ENCODE measurements at regions of chr10 and their contacts with region 1.

Region 1: DNA sequence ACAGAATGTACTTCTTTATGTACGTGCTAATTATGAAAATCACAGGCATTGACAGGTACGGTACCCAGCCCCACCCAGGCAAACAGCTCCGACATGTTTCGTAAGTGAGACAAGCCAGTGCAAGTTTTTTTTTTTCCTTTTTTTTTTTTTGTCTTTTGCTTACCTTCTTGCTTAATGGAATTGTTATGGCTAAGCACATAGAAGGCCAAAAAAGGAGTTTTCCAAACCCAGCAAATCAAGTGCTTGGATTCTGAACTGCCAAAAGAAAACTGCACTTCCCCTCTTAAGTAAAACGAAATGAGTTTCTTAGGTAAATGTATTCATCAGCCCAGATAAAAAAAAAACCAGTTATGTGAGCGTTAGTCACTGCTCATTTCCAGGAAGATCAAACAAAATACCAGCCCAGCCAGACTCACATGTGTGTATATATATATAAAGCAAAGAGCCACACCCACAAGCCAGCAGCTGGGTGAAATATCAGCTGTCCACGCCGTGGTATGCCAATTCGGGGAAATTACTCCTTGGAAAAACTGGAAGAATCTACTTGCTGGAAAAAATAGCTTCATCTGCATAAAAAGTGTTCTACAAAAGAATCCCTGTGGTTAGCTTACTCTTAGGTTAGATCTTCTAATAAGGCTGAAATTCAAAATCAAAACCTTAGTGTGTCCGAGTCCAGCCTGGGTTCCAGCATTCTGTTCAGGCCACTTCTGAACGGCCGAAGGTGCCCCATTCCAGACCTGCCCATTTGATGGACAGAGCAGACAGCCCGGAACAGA is 8.0 kb downstream of the KLF6 start:
- DNase-seq: peak; percentile 72
- H3K4me3 ChIP-seq: peak overlapping the region in 1 of 4 donors; percentile 6
- H3K27ac ChIP-seq: peak overlapping the region; percentile 99 to 100 (median 100)
- H3K4me1 ChIP-seq: peaks cover 11 to 74% (median 62%) of the 10 kb centered on the region in 4 donors
- H3K27me3 ChIP-seq: no peaks in the 10 kb centered on the region
- CTCF ChIP-seq: no peak
- EP300 ChIP-seq: peak; percentile 66
- POLR2A ChIP-seq: peak; percentile 50

Region 2: DNA sequence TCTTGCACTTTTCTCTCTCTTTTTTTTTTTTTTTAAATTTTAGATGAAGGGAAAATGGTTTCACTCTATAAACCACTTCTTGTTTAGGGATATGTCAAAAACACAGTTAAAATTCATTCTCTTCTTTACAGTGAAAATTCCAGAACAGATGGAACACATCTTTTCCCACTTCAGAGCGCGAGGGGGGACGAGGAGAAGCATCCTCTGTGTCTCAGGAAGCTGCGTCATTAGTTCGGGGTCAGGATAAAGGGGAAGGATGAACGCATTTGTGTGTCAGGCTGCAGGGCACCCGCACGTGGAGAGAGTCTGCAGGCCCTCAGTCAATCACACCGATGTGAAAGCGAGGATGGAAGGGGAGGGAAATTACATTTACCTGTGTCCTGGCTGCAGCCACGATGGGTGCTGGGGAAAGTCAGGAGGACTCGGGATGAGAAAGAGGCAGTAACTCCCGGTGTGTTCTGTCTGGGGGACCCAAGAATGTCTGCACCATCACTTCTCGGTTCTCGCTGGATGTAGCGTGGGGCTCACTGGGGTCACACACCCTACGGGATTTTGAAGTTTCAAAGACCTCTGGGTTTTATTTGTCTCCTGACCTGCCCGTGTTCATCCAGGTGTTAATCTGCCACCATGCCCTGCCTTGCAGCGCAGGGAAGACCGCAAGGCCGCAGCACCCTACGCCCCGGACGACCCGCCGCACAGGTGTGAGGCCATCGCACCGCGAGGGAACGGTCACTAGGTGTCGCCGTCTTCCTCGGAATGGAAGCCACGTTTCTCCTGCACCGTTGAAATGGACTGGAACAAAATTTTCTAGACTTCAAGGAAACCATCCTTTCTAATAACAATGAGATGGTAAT is 537.7 kb before region 1 on chr10:
- in situ Hi-C with region 1: loop called in 3 of 4 experiments (anchors 5 to 25 kb)
- intact Hi-C with region 1: no loop called
- DNase-seq: peak; percentile 83
- H3K4me3 ChIP-seq: no peak overlapping the region
- H3K27ac ChIP-seq: no peak overlapping the region
- H3K4me1 ChIP-seq: peaks cover 0 to 7% (median 0%) of the 10 kb centered on the region in 4 donors
- H3K27me3 ChIP-seq: no peaks in the 10 kb centered on the region
- CTCF ChIP-seq: peak; percentile 88 to 95 (median 91)
- EP300 ChIP-seq: no peak
- POLR2A ChIP-seq: no peak

Region 3: GRCh38 chr10:3482200-3483138 is 294.5 kb before region 1 on chr10:
- in situ Hi-C with region 1: loop called in 1 of 4 experiments (anchors 10 kb)
- intact Hi-C with region 1: loop called (anchors 10 kb)
- DNase-seq: peak; percentile 65
- H3K4me3 ChIP-seq: no peak overlapping the region
- H3K27ac ChIP-seq: peak overlapping the region; percentile 42 to 67 (median 63)
- H3K4me1 ChIP-seq: peaks cover 6 to 26% (median 16%) of the 10 kb centered on the region in 4 donors
- H3K27me3 ChIP-seq: no peaks in the 10 kb centered on the region
- CTCF ChIP-seq: no peak
- EP300 ChIP-seq: peak; percentile 87
- POLR2A ChIP-seq: no peak

Region 4: GRCh38 chr10:3924344-3924743 is 147.4 kb after region 1 on chr10:
- in situ Hi-C with region 1: no loop called
- intact Hi-C with region 1: no loop called
- DNase-seq: no peak
- H3K4me3 ChIP-seq: no peak overlapping the region
- H3K27ac ChIP-seq: no peak overlapping the region
- H3K4me1 ChIP-seq: peaks cover 0 to 25% (median 9%) of the 10 kb centered on the region in 4 donors
- H3K27me3 ChIP-seq: no peaks in the 10 kb centered on the region
- CTCF ChIP-seq: no peak
- EP300 ChIP-seq: no peak
- POLR2A ChIP-seq: no peak

Region 5: GRCh38 chr10:4283846-4284610 is 507.0 kb after region 1 on chr10:
- in situ Hi-C with region 1: no loop called
- intact Hi-C with region 1: loop called (anchors 2 kb)
- DNase-seq: peak; percentile 36
- H3K4me3 ChIP-seq: no peak overlapping the region
- H3K27ac ChIP-seq: peak overlapping the region; percentile 60 to 75 (median 66)
- H3K4me1 ChIP-seq: peaks cover 11 to 40% (median 30%) of the 10 kb centered on the region in 4 donors
- H3K27me3 ChIP-seq: no peaks in the 10 kb centered on the region
- CTCF ChIP-seq: no peak
- EP300 ChIP-seq: peak; percentile 72
- POLR2A ChIP-seq: no peak

Measured in transverse colon (tissue), 4 donors.